Right cardiac atrium (tissue), 5 donors: ENCODE measurements at regions of chr9 and their contacts with region 1.

Region 1: GRCh38 chr9:127943731-127944144 is 6.1 kb upstream of the DPM2 start:
- DNase-seq: peak; percentile 87 to 94 (median 94)
- ATAC-seq: peak; percentile 73 to 78
- H3K4me3 ChIP-seq: no peak overlapping the region
- H3K27ac ChIP-seq: no peak overlapping the region
- H3K4me1 ChIP-seq: no peaks in the 10 kb centered on the region
- H3K27me3 ChIP-seq: no peaks in the 10 kb centered on the region

Region 2: DNA sequence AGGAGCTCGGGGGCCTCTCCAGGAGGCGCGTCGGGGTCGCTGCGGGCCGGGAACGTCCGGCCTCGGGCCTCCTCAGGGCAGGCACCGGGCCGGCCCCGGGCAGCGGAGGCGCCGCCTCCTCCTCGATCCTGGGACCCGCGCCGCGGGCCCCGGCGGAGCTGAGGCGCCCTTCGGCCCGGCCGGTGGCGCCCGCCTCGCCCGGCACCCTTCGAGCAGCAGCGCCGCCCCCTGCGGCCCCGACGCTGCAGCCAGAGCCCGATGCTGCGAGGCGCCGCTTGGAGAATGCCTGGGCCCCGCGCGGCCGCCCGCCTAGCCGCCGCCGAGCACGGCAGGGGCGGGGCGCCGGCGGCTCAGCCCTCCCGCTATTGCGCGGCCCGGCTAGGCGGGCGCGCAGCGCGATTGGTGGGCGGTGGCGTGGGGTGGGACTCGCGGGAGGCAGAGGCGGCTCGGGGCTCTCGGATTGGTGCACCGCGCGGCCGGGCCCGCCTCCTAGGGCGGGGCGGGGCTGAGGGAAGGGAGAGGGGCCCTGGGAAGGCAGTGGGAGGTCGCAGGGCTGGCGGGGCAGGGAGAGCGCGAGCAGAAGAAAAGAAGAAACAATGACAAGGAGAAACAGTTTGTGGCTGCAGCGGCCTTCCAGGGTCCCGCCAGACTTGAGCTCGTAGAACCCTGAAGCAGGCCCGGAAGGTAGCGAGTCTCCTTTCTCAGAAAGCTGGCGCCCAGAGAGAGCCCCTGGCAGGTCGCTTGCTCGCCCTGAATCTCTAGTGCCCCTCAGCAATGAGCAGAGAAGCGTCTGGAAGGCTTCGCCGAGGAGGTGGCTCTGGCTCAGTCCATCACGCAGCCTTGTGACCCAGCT is 37.2 kb after region 1 on chr9 and contains the start of gene EEIG1:
- intact Hi-C with region 1: loop called in 1 of 4 experiments (anchors 5 kb)
- DNase-seq: peak; percentile 96 to 99 (median 98)
- ATAC-seq: peak; percentile 96
- H3K4me3 ChIP-seq: peak within 1 kb of the TSS; percentile 92
- H3K27ac ChIP-seq: peak within 1 kb of the TSS; percentile 73
- H3K4me1 ChIP-seq: peaks cover 17% of the 10 kb centered on the region
- H3K27me3 ChIP-seq: no peaks in the 10 kb centered on the region
- total RNA-seq, gene EEIG1: 23.1 to 35.1 (median 31.6) TPM

Region 3: GRCh38 chr9:128034821-128035764 is 91.4 kb after region 1 on chr9:
- intact Hi-C with region 1: loop called (anchors 2 to 5 kb)
- DNase-seq: peak; percentile 73 to 87 (median 77)
- ATAC-seq: peak; percentile 95 to 97
- H3K4me3 ChIP-seq: no peak overlapping the region
- H3K27ac ChIP-seq: no peak overlapping the region
- H3K4me1 ChIP-seq: no peaks in the 10 kb centered on the region
- H3K27me3 ChIP-seq: no peaks in the 10 kb centered on the region

Region 4: GRCh38 chr9:128117613-128118471 is 174.1 kb after region 1 on chr9:
- intact Hi-C with region 1: loop called (anchors 5 to 10 kb)
- DNase-seq: peak; percentile 95 to 98 (median 98)
- ATAC-seq: peak; percentile 58 to 60
- H3K4me3 ChIP-seq: no peak overlapping the region
- H3K27ac ChIP-seq: no peak overlapping the region
- H3K4me1 ChIP-seq: no peaks in the 10 kb centered on the region
- H3K27me3 ChIP-seq: no peaks in the 10 kb centered on the region